T-cell (primary cell): ENCODE measurements at regions of chr9 and their contacts with region 1.

Region 1: DNA sequence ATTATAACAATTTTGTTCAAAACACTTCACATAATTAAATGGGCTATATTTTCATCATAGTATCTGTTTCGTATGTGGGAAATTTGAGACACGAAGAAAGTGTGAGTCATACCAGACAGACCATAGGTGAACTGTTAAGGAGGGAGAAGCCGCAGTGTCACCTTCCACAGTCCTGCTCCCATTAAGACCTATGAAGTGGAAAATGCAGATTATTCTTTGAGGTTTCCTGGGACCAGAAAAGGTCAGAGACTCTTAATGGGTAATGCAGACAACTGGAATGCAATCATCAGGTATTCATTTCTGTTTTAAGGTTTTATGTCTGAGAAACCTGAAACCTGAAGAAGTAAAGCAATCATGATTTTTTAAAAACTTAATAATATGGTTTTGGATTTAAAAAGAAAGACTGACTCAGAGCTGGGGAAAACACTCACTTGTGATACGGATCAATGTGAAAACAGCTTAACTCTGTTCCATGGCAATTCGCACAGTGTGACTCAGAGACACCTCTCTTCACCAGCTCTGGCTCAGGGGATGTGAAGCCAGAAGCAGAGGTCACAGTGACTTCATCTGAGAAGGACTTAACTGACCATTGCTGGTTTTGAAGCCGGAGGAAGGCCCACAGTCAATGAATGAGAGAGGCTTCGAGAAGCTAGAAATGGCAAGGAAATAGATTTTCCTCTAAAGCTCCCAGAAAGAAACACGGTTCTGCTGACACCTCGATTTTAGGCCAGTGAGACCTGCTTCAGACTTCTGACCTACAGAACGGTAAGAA is 17.2 kb upstream of the GCNT1 start:
- DNase-seq: no peak
- ATAC-seq: peak in 1 of 4 experiments; percentile 30
- H3K4me3 ChIP-seq: no peak overlapping the region
- H3K4me3 Mint-ChIP-seq: peak overlapping the region in 1 of 3 donors; percentile 22
- H3K27ac ChIP-seq: no peak overlapping the region
- H3K27ac Mint-ChIP-seq: no peak overlapping the region
- H3K4me1 ChIP-seq: no peaks in the 10 kb centered on the region
- H3K4me1 Mint-ChIP-seq: peaks cover 0 to 13% (median 6%) of the 10 kb centered on the region in 3 donors
- H3K27me3 ChIP-seq: no peaks in the 10 kb centered on the region
- H3K27me3 Mint-ChIP-seq: peaks cover 0 to 5% of the 10 kb centered on the region in 2 donors

Region 2: DNA sequence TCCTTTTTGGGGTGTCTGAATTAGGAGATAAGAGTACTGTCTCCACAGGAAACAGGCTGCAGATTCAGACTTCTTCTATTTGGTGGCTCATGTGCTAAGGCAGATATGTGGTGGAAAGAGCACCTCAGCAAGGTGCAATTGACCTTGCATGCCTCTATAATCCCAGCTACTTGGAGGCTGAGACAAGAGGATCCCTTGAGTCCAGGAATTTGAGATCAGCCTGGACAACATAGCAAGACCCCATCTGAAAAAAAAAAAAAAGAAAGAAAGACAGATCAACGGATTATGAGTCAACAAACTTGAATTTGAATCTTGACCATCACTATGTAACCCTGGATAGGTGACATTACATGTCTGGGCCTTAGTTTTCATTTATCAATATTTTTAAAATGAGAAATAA is 91.9 kb before region 1 on chr9:
- CTCF ChIA-PET with region 1: interaction called in 1 of 2 experiments, 16 read pairs
- POLR2A ChIA-PET with region 1: no interaction called
- DNase-seq: no peak
- ATAC-seq: no peak
- H3K4me3 ChIP-seq: no peak overlapping the region
- H3K4me3 Mint-ChIP-seq: no peak overlapping the region
- H3K27ac ChIP-seq: no peak overlapping the region
- H3K27ac Mint-ChIP-seq: no peak overlapping the region
- H3K4me1 ChIP-seq: no peaks in the 10 kb centered on the region
- H3K4me1 Mint-ChIP-seq: no peaks in the 10 kb centered on the region
- H3K27me3 ChIP-seq: no peaks in the 10 kb centered on the region
- H3K27me3 Mint-ChIP-seq: peaks cover 0 to 4% of the 10 kb centered on the region in 2 donors

Region 3: GRCh38 chr9:76658535-76659231 is 216.9 kb after region 1 on chr9:
- CTCF ChIA-PET with region 1: interaction called, 11 to 12 read pairs
- POLR2A ChIA-PET with region 1: no interaction called
- DNase-seq: peak in 1 of 35 experiments; percentile 64
- ATAC-seq: peak; percentile 62 to 87 (median 78)
- H3K4me3 ChIP-seq: no peak overlapping the region
- H3K4me3 Mint-ChIP-seq: no peak overlapping the region
- H3K27ac ChIP-seq: no peak overlapping the region
- H3K27ac Mint-ChIP-seq: no peak overlapping the region
- H3K4me1 ChIP-seq: peaks cover 2% of the 10 kb centered on the region in 2 experiments
- H3K4me1 Mint-ChIP-seq: peaks cover 17 to 48% (median 24%) of the 10 kb centered on the region in 3 donors
- H3K27me3 ChIP-seq: no peaks in the 10 kb centered on the region
- H3K27me3 Mint-ChIP-seq: no peaks in the 10 kb centered on the region